HCT116 (cell line): ENCODE measurements at regions of chr6 and their contacts with region 1.

Region 1: GRCh38 chr6:139375232-139376016 is 976 bp upstream of the CITED2 start:
- DNase-seq: peak; percentile 83
- ATAC-seq: peak; percentile 64
- H3K4me3 ChIP-seq: peak overlapping the region; percentile 94 to 96
- H3K27ac ChIP-seq: peak overlapping the region; percentile 88
- H3K4me1 ChIP-seq: peaks cover 24 to 61% of the 10 kb centered on the region in 2 experiments
- H3K27me3 ChIP-seq: no peaks in the 10 kb centered on the region
- CTCF ChIP-seq: no peak
- POLR2A ChIP-seq: peak; percentile 73
- RAD21 ChIP-seq: peak; percentile 41

Region 2: DNA sequence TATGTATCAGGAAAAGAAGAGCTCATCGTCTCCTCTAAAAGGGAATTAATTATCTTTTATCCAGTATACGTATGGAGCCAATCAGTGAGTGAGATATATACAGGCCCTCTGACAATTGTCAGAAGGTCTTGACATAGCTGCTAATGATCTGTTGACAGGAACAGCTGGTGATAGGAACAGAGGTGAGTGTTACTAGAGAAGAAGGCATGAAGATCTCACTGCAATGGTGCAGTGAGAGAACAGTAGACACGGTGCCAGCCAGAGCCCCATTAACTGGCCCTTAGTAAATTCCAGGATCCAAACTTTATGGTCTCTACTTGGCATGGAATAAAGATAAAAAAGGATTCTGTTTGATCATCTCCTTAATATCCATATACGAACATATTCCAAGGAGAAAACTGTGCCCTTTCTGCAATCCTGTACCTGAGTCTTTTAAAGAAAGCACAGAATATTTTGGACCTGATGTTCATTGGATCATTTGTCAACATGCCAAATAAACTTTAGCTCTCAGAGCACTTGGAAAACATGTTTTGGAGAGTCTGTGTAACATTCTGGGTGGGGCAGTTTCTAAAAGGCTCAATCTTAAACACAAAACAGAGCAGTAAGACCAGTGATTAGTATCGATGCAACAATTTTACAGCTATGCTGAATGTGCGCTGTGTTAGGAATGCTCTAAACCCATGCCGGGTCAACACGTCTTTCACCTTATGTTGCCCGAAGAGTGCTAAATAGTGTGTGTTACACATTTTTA is 134.8 kb after region 1 on chr6:
- CTCF ChIA-PET with region 1: no interaction called
- POLR2A ChIA-PET with region 1: interaction called, 3 read pairs
- RAD21 ChIA-PET with region 1: no interaction called
- intact Hi-C with region 1: loop called (anchors 5 kb)
- DNase-seq: no peak
- ATAC-seq: no peak
- H3K4me3 ChIP-seq: no peak overlapping the region
- H3K27ac ChIP-seq: no peak overlapping the region
- H3K4me1 ChIP-seq: peaks cover 0 to 2% of the 10 kb centered on the region in 2 experiments; a peak in 2 of 4 replicates
- H3K27me3 ChIP-seq: no peaks in the 10 kb centered on the region
- CTCF ChIP-seq: no peak
- POLR2A ChIP-seq: no peak
- RAD21 ChIP-seq: no peak

Region 3: DNA sequence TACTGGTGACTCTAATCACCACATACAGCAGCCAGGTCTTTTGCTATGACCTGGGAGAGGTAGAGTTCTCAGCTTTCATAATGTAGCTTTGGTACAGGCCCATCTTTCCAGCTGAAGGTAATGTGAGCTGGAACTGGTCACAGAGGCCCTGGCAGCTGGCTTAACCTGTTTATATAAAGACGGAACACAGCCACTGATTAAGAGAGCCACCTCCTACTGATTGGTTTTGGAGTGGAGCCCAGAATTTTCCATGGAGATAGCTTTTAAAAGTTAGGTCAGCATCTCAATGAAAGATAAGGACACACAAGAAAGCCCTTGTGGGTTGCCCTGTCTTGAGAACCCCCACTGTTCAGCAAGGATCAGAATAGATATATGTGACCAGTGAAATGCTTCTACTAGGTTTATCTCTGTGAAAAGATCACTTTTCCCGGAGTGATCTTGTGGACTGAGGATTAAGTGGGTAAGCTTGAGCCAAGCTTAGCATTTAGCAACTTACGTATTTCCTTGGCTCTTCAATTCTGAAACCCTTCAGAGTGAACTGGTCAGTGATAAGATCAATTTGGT is 212.7 kb after region 1 on chr6:
- CTCF ChIA-PET with region 1: no interaction called
- POLR2A ChIA-PET with region 1: interaction called, 5 read pairs
- RAD21 ChIA-PET with region 1: interaction called in 1 of 2 experiments, 6 read pairs
- intact Hi-C with region 1: loop called (anchors 10 kb)
- DNase-seq: peak; percentile 52
- ATAC-seq: peak; percentile 75
- H3K4me3 ChIP-seq: peak overlapping the region in 1 of 2 experiments; percentile 26; a peak in 2 of 4 replicates
- H3K27ac ChIP-seq: peak overlapping the region; percentile 63
- H3K4me1 ChIP-seq: peaks cover 32 to 33% of the 10 kb centered on the region in 2 experiments
- H3K27me3 ChIP-seq: no peaks in the 10 kb centered on the region
- CTCF ChIP-seq: no peak
- POLR2A ChIP-seq: no peak
- RAD21 ChIP-seq: no peak

Region 4: DNA sequence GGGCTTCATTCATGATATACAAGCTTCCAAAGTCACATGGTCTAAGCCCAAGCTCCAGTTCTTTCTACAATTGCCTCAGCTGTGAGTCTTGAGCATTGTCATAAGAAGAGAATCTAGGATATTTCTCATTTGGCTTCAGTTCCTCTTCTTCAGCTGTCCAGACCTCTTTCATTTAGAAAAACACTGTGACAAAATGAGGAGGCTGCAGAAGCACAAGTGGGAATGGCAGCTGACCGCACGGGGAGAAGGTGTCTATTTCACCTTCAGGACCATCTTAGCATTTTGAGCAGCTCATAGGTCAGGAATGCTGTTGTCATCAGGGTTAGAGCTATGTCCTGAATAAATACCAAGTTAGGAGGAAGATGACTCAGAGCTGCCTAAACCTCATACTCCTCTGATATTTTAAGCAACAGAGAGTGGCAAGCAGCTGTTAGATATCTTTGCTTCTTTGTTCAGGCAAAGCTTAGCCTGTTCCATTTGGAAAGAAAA is 389.1 kb after region 1 on chr6:
- CTCF ChIA-PET with region 1: no interaction called
- POLR2A ChIA-PET with region 1: interaction called, 12 read pairs
- RAD21 ChIA-PET with region 1: interaction called in 1 of 2 experiments, 3 read pairs
- intact Hi-C with region 1: loop called (anchors 5 kb)
- DNase-seq: peak; percentile 83
- ATAC-seq: peak; percentile 95
- H3K4me3 ChIP-seq: peak overlapping the region in 1 of 2 experiments; percentile 27; a peak in 2 of 4 replicates
- H3K27ac ChIP-seq: peak overlapping the region; percentile 41; the same call in 1 of the 2 replicates
- H3K4me1 ChIP-seq: peaks cover 22 to 46% of the 10 kb centered on the region in 2 experiments
- H3K27me3 ChIP-seq: no peaks in the 10 kb centered on the region
- CTCF ChIP-seq: no peak
- POLR2A ChIP-seq: no peak
- RAD21 ChIP-seq: no peak

Region 5: GRCh38 chr6:139927236-139927635 is 551.8 kb after region 1 on chr6:
- CTCF ChIA-PET with region 1: no interaction called
- POLR2A ChIA-PET with region 1: interaction called, 3 read pairs
- RAD21 ChIA-PET with region 1: no interaction called
- intact Hi-C with region 1: loop called (anchors 5 kb)
- DNase-seq: no peak
- ATAC-seq: no peak; the same call in 1 of the 2 replicates
- H3K4me3 ChIP-seq: no peak overlapping the region
- H3K27ac ChIP-seq: no peak overlapping the region
- H3K4me1 ChIP-seq: no peaks in the 10 kb centered on the region
- H3K27me3 ChIP-seq: no peaks in the 10 kb centered on the region
- CTCF ChIP-seq: peak in 2 of 3 experiments; percentile 25 to 38; a peak in 4 of 6 replicates
- POLR2A ChIP-seq: no peak
- RAD21 ChIP-seq: peak; percentile 33

Region 6: GRCh38 chr6:140105857-140106256 is 730.4 kb after region 1 on chr6:
- CTCF ChIA-PET with region 1: no interaction called
- POLR2A ChIA-PET with region 1: no interaction called
- RAD21 ChIA-PET with region 1: no interaction called
- intact Hi-C with region 1: loop called (anchors 10 kb)
- DNase-seq: peak; percentile 37
- ATAC-seq: peak; percentile 86
- H3K4me3 ChIP-seq: no peak overlapping the region
- H3K27ac ChIP-seq: no peak overlapping the region
- H3K4me1 ChIP-seq: peaks cover 0 to 7% of the 10 kb centered on the region in 2 experiments; a peak in 2 of 4 replicates
- H3K27me3 ChIP-seq: no peaks in the 10 kb centered on the region
- CTCF ChIP-seq: peak in 2 of 3 experiments; percentile 51 to 55; a peak in 4 of 6 replicates
- POLR2A ChIP-seq: no peak
- RAD21 ChIP-seq: no peak